Activated CD8-positive, alpha-beta T cell treated with anti-CD3 and anti-CD28 coated beads for 36 hours (primary cell): ENCODE measurements at regions of chr7 and their contacts with region 1.

Region 1: GRCh38 chr7:104883718-104884452 is 130.1 kb upstream of the KMT2E start:
- DNase-seq: peak; percentile 83
- ATAC-seq: peak; percentile 90
- H3K4me3 Mint-ChIP-seq: no peak overlapping the region
- H3K27ac Mint-ChIP-seq: peak overlapping the region; percentile 3
- H3K4me1 Mint-ChIP-seq: peaks cover 5% of the 10 kb centered on the region
- H3K27me3 Mint-ChIP-seq: peaks cover 2% of the 10 kb centered on the region
- CTCF ChIP-seq: peak; percentile 95

Region 2: DNA sequence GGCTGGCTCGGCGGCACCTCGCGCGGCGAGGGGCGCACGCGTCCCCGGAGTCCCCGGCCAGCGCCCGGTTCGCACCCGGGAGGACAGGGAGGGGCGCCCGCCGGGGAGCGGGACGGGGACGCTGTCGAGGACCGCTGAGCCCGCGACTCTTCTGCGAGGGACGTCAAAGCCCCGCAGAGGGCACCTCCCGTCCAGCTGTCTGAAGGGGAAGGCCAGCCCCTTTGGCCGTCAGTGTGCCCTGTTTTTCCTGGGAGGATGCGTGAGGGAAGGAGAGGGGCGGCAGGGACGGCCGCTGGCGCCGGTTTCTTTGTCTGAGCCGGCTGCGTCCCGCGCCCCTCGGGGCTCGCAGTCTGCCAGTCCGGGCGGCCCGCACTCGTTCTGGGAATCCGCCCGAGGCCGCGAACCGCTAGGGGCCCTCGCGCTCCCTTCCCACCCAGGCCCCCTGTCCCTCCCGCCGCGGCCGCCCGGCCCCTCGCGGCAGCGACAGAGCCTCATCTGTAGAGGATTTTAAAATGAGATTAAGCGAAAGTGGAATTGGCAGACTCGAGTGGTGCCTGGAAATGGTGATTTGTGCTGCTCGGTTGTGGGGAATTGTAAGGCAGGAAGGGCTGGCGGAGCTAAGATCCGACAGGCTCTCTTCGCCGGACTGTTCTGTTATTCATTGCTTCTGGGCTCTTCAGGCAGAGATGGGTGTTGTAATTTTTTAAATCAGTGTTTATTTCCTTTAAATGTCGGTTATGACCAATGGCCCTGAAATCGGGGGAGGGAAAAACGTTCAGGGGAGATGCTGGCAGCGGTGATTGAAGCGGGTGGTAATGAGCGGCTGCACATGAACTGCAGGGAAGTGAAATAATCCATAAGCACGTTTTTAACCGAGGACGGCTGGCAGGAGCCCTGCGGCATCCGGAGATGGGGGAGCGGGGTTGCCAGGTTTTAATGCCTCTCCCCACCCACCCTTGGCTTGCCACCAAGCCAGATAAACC is 893.8 kb before region 1 on chr7:
- CTCF ChIA-PET with region 1: no interaction called
- POLR2A ChIA-PET with region 1: no interaction called
- intact Hi-C with region 1: no loop called
- DNase-seq: peak; percentile 3
- ATAC-seq: no peak
- H3K4me3 Mint-ChIP-seq: peak overlapping the region; percentile 24
- H3K27ac Mint-ChIP-seq: no peak overlapping the region
- H3K4me1 Mint-ChIP-seq: peaks cover 5% of the 10 kb centered on the region
- H3K27me3 Mint-ChIP-seq: peaks cover 41% of the 10 kb centered on the region
- CTCF ChIP-seq: no peak

Region 3: DNA sequence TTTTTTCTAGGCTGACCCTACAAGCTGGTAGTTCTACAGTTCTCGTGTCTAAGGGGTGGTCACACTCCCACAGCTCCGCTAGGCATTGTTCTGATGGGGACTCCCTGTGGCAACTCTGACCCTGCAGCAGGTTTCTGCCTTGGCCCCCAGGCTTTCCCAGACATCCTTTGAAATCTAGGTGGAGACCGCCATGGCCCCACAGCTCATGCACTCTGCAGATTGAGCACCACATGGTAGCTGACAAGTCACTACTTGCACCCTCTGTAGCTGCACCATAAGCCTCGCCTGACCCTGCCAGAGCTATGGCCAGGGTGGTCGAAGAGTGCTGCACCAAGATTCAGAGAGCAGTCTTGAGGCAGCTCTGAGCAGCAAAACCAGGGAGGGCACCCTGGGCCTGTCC is 279.9 kb before region 1 on chr7:
- CTCF ChIA-PET with region 1: no interaction called
- POLR2A ChIA-PET with region 1: no interaction called
- intact Hi-C with region 1: no loop called
- DNase-seq: no peak
- ATAC-seq: no peak
- H3K4me3 Mint-ChIP-seq: no peak overlapping the region
- H3K27ac Mint-ChIP-seq: no peak overlapping the region
- H3K4me1 Mint-ChIP-seq: no peaks in the 10 kb centered on the region
- H3K27me3 Mint-ChIP-seq: no peaks in the 10 kb centered on the region
- CTCF ChIP-seq: no peak

Region 4: GRCh38 chr7:104848138-104848990 is 35.5 kb before region 1 on chr7:
- CTCF ChIA-PET with region 1: interaction called, 17 read pairs
- POLR2A ChIA-PET with region 1: no interaction called
- intact Hi-C with region 1: no loop called
- DNase-seq: peak; percentile 64
- ATAC-seq: peak; percentile 64
- H3K4me3 Mint-ChIP-seq: no peak overlapping the region
- H3K27ac Mint-ChIP-seq: no peak overlapping the region
- H3K4me1 Mint-ChIP-seq: no peaks in the 10 kb centered on the region
- H3K27me3 Mint-ChIP-seq: peaks cover 15% of the 10 kb centered on the region
- CTCF ChIP-seq: peak; percentile 93

Region 5: DNA sequence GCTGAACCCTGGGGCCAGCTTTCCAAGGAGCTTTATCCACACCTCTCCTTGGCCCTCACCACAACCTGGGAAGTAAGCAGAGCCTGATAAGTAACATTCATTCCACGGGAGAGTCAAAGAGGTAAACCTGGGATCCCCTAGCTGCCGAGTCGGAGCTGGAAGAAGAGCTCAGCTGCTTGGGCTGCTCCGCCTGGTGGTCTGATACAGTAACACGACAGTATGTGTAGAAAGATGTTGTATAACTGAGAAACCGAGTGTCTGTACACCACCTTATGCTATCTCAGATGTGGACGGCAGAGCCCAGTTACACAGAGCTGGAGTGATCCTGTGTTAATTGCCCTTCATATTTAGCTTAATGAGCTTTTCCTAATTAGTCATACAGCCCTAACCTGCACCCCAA is 21.2 kb before region 1 on chr7:
- CTCF ChIA-PET with region 1: interaction called, 23 read pairs
- POLR2A ChIA-PET with region 1: no interaction called
- intact Hi-C with region 1: no loop called
- DNase-seq: no peak
- ATAC-seq: no peak
- H3K4me3 Mint-ChIP-seq: no peak overlapping the region
- H3K27ac Mint-ChIP-seq: no peak overlapping the region
- H3K4me1 Mint-ChIP-seq: peaks cover 10% of the 10 kb centered on the region
- H3K27me3 Mint-ChIP-seq: peaks cover 4% of the 10 kb centered on the region
- CTCF ChIP-seq: no peak

Region 6: DNA sequence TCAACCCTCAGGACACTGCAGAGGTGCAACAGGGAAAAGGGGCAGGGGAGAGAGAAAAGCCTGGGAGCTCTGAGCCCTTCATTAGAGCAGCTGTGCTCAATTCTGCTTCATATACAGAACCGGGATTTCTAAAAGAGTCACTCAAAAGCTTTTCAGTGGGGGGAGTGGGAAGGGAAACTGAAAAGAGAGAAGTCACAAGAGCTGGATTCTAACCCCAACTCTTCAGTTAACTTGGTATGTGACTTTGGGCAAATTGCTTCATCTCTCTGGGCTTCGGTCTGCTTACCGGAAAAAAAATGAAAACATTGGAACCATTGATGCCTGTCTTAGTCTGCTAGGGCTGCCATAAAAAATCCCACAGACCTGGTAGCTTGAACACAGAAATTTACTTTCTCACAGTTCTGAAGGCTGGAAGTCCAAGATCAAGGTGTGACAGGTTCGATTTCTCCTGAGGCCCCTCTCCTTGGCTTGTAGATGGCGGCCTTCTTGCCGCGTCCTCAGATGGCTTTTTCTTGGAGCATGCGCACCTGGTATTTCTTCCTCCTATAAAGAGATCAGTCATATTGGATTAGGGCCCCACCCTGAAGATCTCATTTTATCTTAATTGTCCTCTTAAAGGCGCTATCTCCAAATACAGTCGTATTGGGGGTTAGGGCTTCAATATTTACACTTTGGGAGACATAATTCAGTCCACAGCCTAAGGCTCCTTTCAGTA is 11.8 kb after region 1 on chr7:
- CTCF ChIA-PET with region 1: interaction called, 41 read pairs
- POLR2A ChIA-PET with region 1: no interaction called
- intact Hi-C with region 1: no loop called
- DNase-seq: no peak
- ATAC-seq: no peak
- H3K4me3 Mint-ChIP-seq: no peak overlapping the region
- H3K27ac Mint-ChIP-seq: no peak overlapping the region
- H3K4me1 Mint-ChIP-seq: peaks cover 6% of the 10 kb centered on the region
- H3K27me3 Mint-ChIP-seq: peaks cover 2% of the 10 kb centered on the region
- CTCF ChIP-seq: no peak

Region 7: DNA sequence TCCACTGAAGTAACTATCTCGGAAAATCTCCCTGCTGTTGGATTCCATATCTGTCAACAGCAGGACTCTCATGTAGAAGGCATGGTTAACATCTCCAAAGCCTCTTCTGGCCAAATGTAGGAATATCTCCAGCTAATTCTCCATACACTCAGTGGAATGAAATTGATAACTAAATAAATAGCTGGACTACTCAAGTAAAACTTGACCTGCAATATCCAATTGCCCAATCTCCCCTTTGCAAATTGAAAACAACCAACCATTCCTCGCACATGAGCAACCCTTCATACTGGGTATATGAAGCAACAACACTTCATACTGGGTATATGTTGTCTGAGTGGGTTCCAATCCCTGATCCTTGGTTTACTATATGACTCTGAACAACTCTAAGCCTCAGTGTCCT is 24.8 kb after region 1 on chr7:
- CTCF ChIA-PET with region 1: interaction called, 23 read pairs
- POLR2A ChIA-PET with region 1: no interaction called
- intact Hi-C with region 1: no loop called
- DNase-seq: no peak
- ATAC-seq: no peak
- H3K4me3 Mint-ChIP-seq: no peak overlapping the region
- H3K27ac Mint-ChIP-seq: no peak overlapping the region
- H3K4me1 Mint-ChIP-seq: no peaks in the 10 kb centered on the region
- H3K27me3 Mint-ChIP-seq: peaks cover 5% of the 10 kb centered on the region
- CTCF ChIP-seq: no peak

Region 8: DNA sequence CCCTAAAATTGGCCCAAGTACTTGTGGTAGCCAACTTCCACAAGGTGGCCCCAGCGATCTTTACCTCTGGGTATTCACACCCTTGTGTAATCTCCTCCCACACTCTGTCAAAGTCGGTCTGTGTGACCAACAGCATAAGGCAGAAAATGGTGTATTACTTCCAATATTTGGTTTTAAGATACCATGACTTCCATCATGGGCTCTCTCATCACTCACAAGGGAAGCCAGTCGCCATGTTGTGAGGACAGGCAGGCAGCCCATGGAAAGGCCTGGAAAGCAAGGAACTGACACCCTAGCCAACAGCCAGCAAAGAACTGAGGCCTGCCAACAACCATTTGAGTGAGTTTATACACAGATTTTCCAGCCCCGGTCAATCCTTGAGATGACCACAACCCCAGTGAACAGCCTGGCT is 39.1 kb after region 1 on chr7:
- CTCF ChIA-PET with region 1: interaction called, 162 read pairs
- POLR2A ChIA-PET with region 1: no interaction called
- intact Hi-C with region 1: loop called (anchors 1 kb)
- DNase-seq: peak; percentile 91
- ATAC-seq: peak; percentile 99
- H3K4me3 Mint-ChIP-seq: no peak overlapping the region
- H3K27ac Mint-ChIP-seq: peak overlapping the region; percentile 52
- H3K4me1 Mint-ChIP-seq: peaks cover 4% of the 10 kb centered on the region
- H3K27me3 Mint-ChIP-seq: no peaks in the 10 kb centered on the region
- CTCF ChIP-seq: peak; percentile 77

Region 9: DNA sequence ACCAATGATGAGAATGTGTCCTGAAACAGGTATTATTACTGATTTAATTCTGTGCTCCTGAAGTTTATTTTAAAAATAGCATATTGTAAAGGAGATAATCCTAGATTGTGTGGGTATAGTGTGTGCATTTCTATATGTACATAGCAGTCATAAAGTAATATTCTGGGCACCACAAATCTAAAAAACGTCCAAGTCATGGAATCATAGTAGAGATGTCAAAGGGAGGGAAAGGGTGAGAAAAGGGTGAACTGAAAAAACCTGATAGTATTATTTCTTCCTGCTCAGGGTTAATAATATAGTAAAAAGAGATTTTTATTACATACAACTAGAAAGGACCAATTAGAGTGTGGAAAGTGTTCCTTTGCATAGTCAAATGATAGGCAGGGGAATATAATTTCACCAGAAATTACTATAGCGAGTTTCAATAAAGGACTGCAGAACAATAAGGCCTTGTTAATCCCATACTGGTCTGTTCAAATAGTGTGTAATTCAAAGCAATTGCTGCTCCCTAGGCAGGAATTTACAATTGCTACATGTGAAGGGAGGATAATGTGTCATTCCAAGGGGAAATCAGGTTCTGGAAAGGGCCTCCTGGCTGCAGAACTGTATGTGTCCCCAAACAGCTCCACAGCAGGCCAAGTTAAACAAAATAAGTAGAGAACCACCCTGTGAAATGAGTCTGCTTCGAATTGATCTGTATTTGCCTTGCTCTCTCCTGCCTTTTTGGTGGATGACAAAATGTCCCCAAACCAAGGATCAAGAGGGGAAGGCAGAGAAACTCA is 87.6 kb after region 1 on chr7:
- CTCF ChIA-PET with region 1: no interaction called
- POLR2A ChIA-PET with region 1: no interaction called
- intact Hi-C with region 1: no loop called
- DNase-seq: no peak
- ATAC-seq: no peak
- H3K4me3 Mint-ChIP-seq: no peak overlapping the region
- H3K27ac Mint-ChIP-seq: no peak overlapping the region
- H3K4me1 Mint-ChIP-seq: peaks cover 7% of the 10 kb centered on the region
- H3K27me3 Mint-ChIP-seq: no peaks in the 10 kb centered on the region
- CTCF ChIP-seq: no peak

Region 10: GRCh38 chr7:105013221-105013815 is 129.4 kb after region 1 on chr7:
- CTCF ChIA-PET with region 1: no interaction called
- POLR2A ChIA-PET with region 1: no interaction called
- intact Hi-C with region 1: no loop called
- DNase-seq: peak; percentile 95
- ATAC-seq: peak; percentile 58
- H3K4me3 Mint-ChIP-seq: peak overlapping the region; percentile 100
- H3K27ac Mint-ChIP-seq: peak overlapping the region; percentile 100
- H3K4me1 Mint-ChIP-seq: peaks cover 14% of the 10 kb centered on the region
- H3K27me3 Mint-ChIP-seq: no peaks in the 10 kb centered on the region
- CTCF ChIP-seq: peak; percentile 38